CD4-positive, alpha-beta memory T cell (primary cell): ENCODE measurements at regions of chr5 and their contacts with region 1.

Region 1: GRCh38 chr5:180315762-180316212 is 23.9 kb upstream of the MAPK9 start:
- DNase-seq: peak; percentile 55 to 73 (median 61)
- H3K4me3 ChIP-seq: no peak overlapping the region
- H3K4me3 Mint-ChIP-seq: peak overlapping the region in 1 of 8 donors; percentile 14
- H3K27ac ChIP-seq: no peak overlapping the region
- H3K27ac Mint-ChIP-seq: peak overlapping the region in 1 of 7 donors; percentile 2
- H3K4me1 ChIP-seq: no peaks in the 10 kb centered on the region
- H3K4me1 Mint-ChIP-seq: peaks cover 0 to 15% (median 4%) of the 10 kb centered on the region in 4 donors
- H3K27me3 ChIP-seq: no peaks in the 10 kb centered on the region
- H3K27me3 Mint-ChIP-seq: peaks cover 3 to 6% of the 10 kb centered on the region in 2 donors

Region 2: DNA sequence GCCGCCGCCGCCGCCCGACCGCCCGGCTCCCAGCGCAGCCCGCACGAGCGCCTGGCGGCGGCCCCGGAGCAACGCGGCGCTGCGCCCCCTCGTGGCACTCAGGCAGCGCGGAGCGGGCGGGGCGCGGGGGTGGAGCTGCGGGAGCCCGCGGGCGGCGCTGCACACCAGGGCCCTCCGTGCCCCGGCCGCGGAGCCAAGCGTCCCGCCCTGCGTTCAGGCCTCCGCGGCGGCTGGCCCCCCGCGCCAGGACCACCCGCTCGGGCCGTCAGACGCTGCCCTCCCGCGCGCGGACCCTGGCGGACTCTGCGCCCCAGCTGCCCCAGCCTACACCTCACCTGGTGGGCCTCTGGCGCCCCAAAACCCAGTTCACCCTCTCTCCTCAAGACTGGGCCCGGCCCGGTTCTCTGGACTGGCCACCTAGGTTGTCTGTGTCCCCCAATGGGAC is 106.6 kb before region 1 on chr5 and contains the start of gene RASGEF1C:
- CTCF ChIA-PET with region 1: no interaction called
- POLR2A ChIA-PET with region 1: no interaction called
- intact Hi-C with region 1: loop called (anchors 10 kb)
- DNase-seq: peak in 4 of 5 donors; percentile 45 to 57 (median 46)
- H3K4me3 ChIP-seq: no peak within 1 kb of the TSS
- H3K4me3 Mint-ChIP-seq: peak within 1 kb of the TSS; percentile 5 to 68 (median 58)
- H3K27ac ChIP-seq: no peak within 1 kb of the TSS
- H3K27ac Mint-ChIP-seq: no peak within 1 kb of the TSS
- H3K4me1 ChIP-seq: peaks cover 6% of the 10 kb centered on the region
- H3K4me1 Mint-ChIP-seq: peaks cover 4 to 11% (median 6%) of the 10 kb centered on the region in 4 donors
- H3K27me3 ChIP-seq: peaks cover 14% of the 10 kb centered on the region
- H3K27me3 Mint-ChIP-seq: peaks cover 33 to 38% of the 10 kb centered on the region in 2 donors
- total RNA-seq, gene RASGEF1C: not detected

Region 3: GRCh38 chr5:180281706-180282105 is 34.1 kb before region 1 on chr5:
- CTCF ChIA-PET with region 1: interaction called, 10 read pairs
- POLR2A ChIA-PET with region 1: no interaction called
- intact Hi-C with region 1: no loop called
- DNase-seq: no peak
- H3K4me3 ChIP-seq: no peak overlapping the region
- H3K4me3 Mint-ChIP-seq: no peak overlapping the region
- H3K27ac ChIP-seq: no peak overlapping the region
- H3K27ac Mint-ChIP-seq: peak overlapping the region in 1 of 7 donors; percentile 57
- H3K4me1 ChIP-seq: no peaks in the 10 kb centered on the region
- H3K4me1 Mint-ChIP-seq: peaks cover 6 to 18% (median 14%) of the 10 kb centered on the region in 4 donors
- H3K27me3 ChIP-seq: no peaks in the 10 kb centered on the region
- H3K27me3 Mint-ChIP-seq: no peaks in the 10 kb centered on the region

Region 4: DNA sequence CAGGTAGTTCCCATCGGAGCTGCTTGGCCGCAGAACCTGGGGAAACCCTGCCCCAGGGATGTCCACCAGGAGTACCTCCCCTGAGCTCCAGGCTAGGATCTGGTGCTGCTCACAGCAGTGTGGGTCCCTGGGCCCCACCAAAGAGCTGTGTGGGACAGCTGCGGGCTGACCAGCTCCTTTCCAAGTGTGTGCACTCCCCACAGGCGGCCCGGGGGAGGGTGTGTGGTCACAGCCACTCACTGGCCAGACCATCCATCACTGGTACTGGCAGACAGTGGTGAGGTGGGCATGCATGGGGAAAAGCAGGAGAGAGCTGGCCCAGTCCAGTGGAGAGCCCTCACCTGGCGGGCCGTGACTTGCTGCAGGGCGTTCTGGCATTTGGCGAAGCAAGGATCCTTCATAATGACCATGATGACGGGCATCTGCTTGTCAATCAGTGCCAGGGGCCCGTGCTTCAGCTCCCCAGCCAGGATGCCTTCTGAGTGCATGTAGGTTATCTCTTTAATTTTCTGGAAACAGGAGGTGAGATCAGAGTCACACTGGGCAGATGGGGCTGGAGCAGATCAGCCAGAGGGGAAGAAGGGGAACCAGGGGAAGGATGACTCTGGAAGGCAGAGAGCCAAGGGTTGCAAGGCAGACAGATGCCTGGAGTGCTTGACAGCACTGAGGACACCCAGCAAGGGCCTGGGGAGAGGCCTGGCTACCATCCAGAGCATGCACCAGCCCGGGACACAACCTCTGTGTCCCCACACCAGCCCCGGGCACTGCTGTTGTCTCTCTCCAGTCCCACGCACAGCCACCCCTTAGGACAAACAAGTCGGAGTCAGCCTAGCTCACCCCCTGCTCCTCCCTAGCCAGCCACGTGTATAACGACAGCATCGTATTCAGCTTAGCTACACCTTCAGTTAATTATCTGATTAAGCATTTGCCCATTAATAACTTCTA is 11.1 kb before region 1 on chr5:
- CTCF ChIA-PET with region 1: interaction called, 26 read pairs
- POLR2A ChIA-PET with region 1: no interaction called
- intact Hi-C with region 1: no loop called
- DNase-seq: no peak
- H3K4me3 ChIP-seq: no peak overlapping the region
- H3K4me3 Mint-ChIP-seq: no peak overlapping the region
- H3K27ac ChIP-seq: no peak overlapping the region
- H3K27ac Mint-ChIP-seq: peak overlapping the region in 1 of 7 donors; percentile 60
- H3K4me1 ChIP-seq: no peaks in the 10 kb centered on the region
- H3K4me1 Mint-ChIP-seq: no peaks in the 10 kb centered on the region
- H3K27me3 ChIP-seq: no peaks in the 10 kb centered on the region
- H3K27me3 Mint-ChIP-seq: peaks cover 0 to 6% of the 10 kb centered on the region in 2 donors

Region 5: DNA sequence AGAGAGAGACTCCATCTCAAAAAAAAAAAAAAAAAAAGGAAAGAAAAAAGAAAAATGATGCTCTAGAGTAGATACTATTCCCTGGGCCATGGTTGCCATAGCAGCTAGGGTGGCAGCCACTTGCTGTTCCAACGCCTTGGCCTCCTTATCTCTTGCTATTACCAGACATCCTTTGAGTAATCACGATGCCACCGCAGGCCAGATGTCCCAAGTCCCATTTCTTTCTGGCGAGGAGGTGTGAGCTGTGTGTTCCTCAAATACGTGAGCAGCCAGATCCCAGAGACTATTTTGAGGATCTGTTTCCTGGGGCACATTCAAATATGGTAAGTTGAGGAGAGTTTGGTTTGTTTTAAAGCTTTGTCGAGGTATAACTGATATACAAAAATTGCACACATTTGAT is 60.7 kb after region 1 on chr5:
- CTCF ChIA-PET with region 1: no interaction called
- POLR2A ChIA-PET with region 1: no interaction called
- intact Hi-C with region 1: no loop called
- DNase-seq: no peak
- H3K4me3 ChIP-seq: no peak overlapping the region
- H3K4me3 Mint-ChIP-seq: no peak overlapping the region
- H3K27ac ChIP-seq: no peak overlapping the region
- H3K27ac Mint-ChIP-seq: no peak overlapping the region
- H3K4me1 ChIP-seq: no peaks in the 10 kb centered on the region
- H3K4me1 Mint-ChIP-seq: no peaks in the 10 kb centered on the region
- H3K27me3 ChIP-seq: no peaks in the 10 kb centered on the region
- H3K27me3 Mint-ChIP-seq: peaks cover 0 to 1% of the 10 kb centered on the region in 2 donors